Activated CD4-positive, alpha-beta T cell treated with anti-CD3 and anti-CD28 coated beads, Interleukin-2, amount 10 ng/mL, durations not matched to agents 24 days and 14 days (primary cell): ENCODE measurements at regions of chr2 and their contacts with region 1.

Region 1: GRCh38 chr2:207529330-207530159 is at the start of gene CREB1:
- DNase-seq: peak; percentile 100
- H3K4me3 Mint-ChIP-seq: peak within 1 kb of the TSS; percentile 93
- H3K27ac Mint-ChIP-seq: peak within 1 kb of the TSS; percentile 99
- H3K4me1 Mint-ChIP-seq: peaks cover 50% of the 10 kb centered on the region
- H3K27me3 Mint-ChIP-seq: no peaks in the 10 kb centered on the region
- total RNA-seq, gene CREB1: 106 and 107 TPM in 2 replicates

Region 2: DNA sequence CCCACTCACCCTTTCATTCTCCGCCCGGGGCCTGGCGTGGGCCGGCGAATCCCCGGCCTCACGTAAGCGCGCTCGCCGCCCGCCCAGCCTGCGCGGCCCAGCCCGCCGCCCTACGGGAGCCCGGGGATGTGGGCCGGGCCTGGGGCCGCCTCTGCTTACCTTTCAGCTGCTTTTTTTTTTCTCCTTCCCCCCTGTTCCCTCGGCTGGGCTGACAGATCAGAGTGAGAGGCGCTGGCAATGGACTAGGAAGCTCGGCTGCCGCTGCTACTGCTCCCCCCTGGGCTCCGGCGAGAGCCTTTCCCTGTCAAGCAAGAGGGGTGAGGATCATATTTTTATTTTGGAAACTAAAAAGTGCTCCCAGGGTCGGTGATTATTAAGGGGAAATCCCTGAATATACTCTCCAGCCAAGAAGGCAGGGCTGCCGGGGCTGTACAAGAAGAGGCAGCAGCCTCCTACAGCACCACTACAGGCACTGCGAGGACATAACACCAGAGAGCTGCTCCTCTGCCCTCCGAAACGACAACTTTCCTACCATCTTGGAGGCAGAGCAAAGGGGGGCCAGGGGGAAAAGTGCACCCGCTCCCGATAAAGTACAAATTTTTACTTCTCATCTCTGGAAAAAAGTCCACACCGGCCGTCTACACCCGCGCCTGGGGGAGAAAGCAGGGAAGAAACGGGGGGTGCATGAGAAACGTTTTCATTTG is 1443.7 kb before region 1 on chr2 and contains the start of gene INO80D:
- intact Hi-C with region 1: loop called (anchors 5 kb)
- DNase-seq: peak; percentile 93
- H3K4me3 Mint-ChIP-seq: peak within 1 kb of the TSS; percentile 100
- H3K27ac Mint-ChIP-seq: peak within 1 kb of the TSS; percentile 100
- H3K4me1 Mint-ChIP-seq: peaks cover 20% of the 10 kb centered on the region
- H3K27me3 Mint-ChIP-seq: no peaks in the 10 kb centered on the region
- total RNA-seq, gene INO80D: 26.2 and 27.5 TPM in 2 replicates

Region 3: GRCh38 chr2:206765242-206766056 is 764.1 kb before region 1 on chr2 and contains the starts of genes FASTKD2 and MDH1B:
- intact Hi-C with region 1: loop called (anchors 1 kb)
- DNase-seq: peak; percentile 95
- H3K4me3 Mint-ChIP-seq: peak within 1 kb of the TSS; percentile 95
- H3K27ac Mint-ChIP-seq: peak within 1 kb of the TSS; percentile 99
- H3K4me1 Mint-ChIP-seq: peaks cover 29% of the 10 kb centered on the region
- H3K27me3 Mint-ChIP-seq: peaks cover 4% of the 10 kb centered on the region
- total RNA-seq, gene FASTKD2: 39.1 and 39.2 TPM in 2 replicates
- total RNA-seq, gene MDH1B: 0.12 and 0.47 TPM in 2 replicates

Region 4: DNA sequence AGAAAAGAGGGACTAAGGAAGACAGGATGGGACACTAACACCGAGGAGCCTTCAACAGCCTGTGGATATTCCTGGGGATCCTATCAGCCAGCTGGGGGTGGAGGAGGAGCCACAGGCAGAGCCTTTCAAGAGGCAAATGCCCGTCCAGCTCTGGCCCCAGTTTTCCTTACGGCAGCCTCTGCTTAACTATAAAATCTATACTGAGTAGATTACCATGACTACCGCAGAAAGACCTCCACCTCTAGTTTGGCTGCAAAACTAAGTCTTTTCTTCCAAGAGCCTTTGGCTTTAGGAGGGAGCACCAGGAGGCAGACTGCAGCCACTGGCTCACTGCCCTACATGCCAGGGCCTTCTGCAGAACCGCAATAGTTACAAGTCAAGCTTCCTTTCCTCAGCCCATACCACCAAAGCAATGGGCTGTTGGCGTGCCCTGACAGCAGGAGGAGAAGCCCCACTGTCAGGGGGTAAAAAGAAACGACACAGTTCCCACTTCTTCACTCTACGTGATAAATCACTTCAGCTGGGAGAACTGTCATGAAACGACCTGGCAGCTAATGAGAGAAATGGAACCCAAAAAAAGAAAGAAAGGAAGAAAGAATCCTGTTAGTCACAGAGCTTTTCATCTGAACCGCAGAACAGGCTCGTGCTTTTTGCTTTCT is 24.9 kb before region 1 on chr2:
- intact Hi-C with region 1: loop called (anchors 1 kb)
- DNase-seq: no peak
- H3K4me3 Mint-ChIP-seq: peak overlapping the region; percentile 50
- H3K27ac Mint-ChIP-seq: peak overlapping the region; percentile 15
- H3K4me1 Mint-ChIP-seq: peaks cover 65% of the 10 kb centered on the region
- H3K27me3 Mint-ChIP-seq: no peaks in the 10 kb centered on the region

Region 5: DNA sequence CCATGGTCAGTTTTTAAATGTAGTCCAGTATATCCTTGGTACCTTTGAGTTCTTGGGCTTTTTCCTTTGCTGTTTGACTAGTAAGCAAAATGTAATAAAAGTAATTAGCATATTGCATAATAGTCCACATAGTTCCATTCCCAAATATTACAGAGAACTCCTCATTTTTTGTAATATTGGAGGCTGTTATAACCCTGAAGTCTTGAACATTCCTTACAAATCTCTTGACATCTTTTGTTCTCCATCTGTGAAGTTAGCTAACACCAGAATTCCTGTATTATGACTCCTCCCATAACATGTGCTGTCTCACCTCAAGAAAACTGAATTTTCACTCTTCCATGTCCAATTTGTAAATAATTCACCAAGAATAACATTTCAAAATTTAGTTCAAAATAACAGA is 17.3 kb after region 1 on chr2:
- intact Hi-C with region 1: loop called (anchors 2 kb)
- DNase-seq: no peak
- H3K4me3 Mint-ChIP-seq: no peak overlapping the region
- H3K27ac Mint-ChIP-seq: no peak overlapping the region
- H3K4me1 Mint-ChIP-seq: peaks cover 30% of the 10 kb centered on the region
- H3K27me3 Mint-ChIP-seq: no peaks in the 10 kb centered on the region

Region 6: DNA sequence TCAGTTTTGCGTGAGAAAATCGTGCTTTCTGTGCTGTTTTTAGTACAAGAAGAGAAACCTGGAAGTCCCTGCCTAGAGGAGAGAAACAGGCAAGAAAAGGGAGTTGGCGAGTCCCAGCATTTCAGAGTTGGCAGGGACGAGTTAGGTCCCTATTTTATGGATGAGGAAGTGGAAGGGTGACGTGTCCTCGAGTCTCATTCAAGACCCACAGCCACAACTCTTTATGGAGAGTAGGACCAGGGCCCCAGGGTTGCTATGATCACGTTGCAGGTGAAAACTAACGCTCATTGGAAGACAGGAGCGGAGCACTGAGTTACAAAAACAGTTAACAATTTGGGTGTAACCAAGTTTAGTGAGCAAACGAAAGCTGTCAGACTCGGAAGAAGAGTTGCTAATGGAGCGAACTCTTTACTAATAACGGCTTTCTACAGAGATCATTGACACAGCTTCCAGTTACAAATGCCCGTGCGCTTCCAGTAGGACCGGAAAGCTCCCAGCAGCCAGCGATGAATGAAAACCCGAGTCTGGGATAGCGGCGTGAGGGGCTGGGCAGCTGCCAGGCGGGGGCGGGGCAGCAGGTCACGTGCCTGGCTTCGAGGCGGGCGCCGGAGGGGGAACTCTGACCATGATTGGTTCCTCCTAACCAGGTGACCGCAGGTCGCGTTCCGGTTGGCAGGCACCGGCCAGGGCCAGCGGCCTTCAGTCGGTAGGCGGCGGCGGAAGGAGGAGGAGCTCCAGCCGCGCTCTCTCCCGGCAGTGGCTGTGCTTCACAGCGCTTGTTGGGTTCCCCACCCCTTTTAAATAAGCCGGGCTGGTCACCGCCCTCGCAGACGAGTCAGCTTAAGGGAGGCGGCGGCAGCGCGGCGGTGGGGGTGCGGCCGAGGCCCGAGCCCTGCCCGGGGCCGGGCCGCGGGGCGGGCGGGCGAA is 181.5 kb after region 1 on chr2 and contains the start of gene CCNYL1:
- intact Hi-C with region 1: loop called (anchors 2 kb)
- DNase-seq: peak; percentile 99
- H3K4me3 Mint-ChIP-seq: peak within 1 kb of the TSS; percentile 100
- H3K27ac Mint-ChIP-seq: peak within 1 kb of the TSS; percentile 88
- H3K4me1 Mint-ChIP-seq: peaks cover 23% of the 10 kb centered on the region
- H3K27me3 Mint-ChIP-seq: no peaks in the 10 kb centered on the region
- total RNA-seq, gene CCNYL1: 6.1 and 8.7 TPM in 2 replicates

Region 7: DNA sequence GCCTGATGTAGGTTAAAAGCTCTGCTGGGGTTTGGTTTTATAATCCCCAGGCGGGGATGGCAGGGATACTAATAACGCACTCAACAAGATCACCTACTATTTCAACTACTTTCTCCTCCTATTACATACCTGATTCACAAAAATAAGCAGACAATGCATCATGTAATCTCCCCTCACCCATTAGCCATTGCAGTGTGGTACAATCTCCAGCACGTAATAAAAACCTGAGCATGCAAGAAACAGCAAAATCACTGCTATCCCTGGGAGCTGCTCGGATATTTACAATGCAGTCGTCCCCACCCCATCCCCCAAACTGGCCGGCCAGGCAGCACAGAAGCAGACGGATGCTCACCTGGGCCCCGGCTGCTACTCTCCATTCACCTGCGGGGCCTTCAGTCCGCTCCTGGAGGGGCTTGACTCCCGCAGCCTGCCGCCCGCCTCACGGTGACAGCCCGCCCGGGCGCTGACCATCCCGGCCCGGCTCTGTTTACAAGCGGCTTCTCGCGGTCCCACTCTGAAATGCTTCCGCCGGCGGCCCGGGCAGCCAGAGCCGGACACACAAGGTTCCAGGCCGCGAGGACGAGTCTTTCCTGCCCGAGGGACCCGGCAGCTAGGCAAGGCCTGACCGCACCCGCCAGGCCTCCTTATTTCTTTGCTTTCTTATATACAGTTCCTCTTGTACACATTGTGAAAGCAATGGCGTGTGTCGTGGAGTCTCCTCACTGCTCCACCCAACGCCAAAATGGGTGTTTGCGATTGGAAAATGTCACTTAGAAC is 495.7 kb after region 1 on chr2 and contains the start of gene PLEKHM3:
- intact Hi-C with region 1: loop called (anchors 10 kb)
- DNase-seq: peak; percentile 94
- H3K4me3 Mint-ChIP-seq: peak within 1 kb of the TSS; percentile 93
- H3K27ac Mint-ChIP-seq: peak within 1 kb of the TSS; percentile 84
- H3K4me1 Mint-ChIP-seq: peaks cover 10% of the 10 kb centered on the region
- H3K27me3 Mint-ChIP-seq: no peaks in the 10 kb centered on the region
- total RNA-seq, gene PLEKHM3: 5.8 and 6.6 TPM in 2 replicates